A549 (cell line): ENCODE measurements at regions of chr2 and their contacts with region 1.

Region 1: DNA sequence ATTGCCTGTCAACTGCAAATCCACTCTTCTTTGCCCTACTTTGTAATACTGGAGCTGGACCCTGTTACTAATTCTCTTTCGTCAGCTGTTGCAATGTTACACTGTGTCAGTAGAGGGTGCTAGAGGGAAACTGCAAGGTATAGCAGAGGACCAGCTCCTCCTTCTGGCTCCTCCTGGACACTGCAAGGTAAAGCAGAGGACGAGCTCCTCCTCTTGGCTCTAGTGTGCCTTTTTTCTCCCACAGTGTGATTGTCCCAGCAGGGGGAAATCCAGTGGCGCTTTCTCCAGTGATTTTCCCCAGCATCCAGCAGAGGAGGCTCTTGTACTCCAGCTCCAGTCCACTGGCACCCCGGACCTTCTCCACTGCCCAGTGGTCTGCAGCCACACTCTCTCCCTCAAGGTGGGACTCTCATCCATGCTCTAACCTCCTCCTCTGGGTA is 95.6 kb downstream of the CAPN13 start:
- DNase-seq: peak; percentile 80 to 94
- ATAC-seq: peak; percentile 66 to 87
- H3K4me3 ChIP-seq: no peak overlapping the region
- H3K27ac ChIP-seq: no peak overlapping the region
- H3K4me1 ChIP-seq: no peaks in the 10 kb centered on the region
- CTCF ChIP-seq: peak; percentile 100
- EP300 ChIP-seq: no peak
- POLR2A ChIP-seq: no peak
- RAD21 ChIP-seq: peak; percentile 91 to 99

Region 2: GRCh38 chr2:30089171-30089570 is 622.5 kb before region 1 on chr2:
- CTCF ChIA-PET with region 1: interaction called, 11 read pairs
- POLR2A ChIA-PET with region 1: no interaction called
- DNase-seq: no peak
- ATAC-seq: no peak
- H3K4me3 ChIP-seq: no peak overlapping the region
- H3K27ac ChIP-seq: no peak overlapping the region
- H3K4me1 ChIP-seq: no peaks in the 10 kb centered on the region
- CTCF ChIP-seq: no peak
- EP300 ChIP-seq: no peak
- POLR2A ChIP-seq: no peak
- RAD21 ChIP-seq: no peak

Region 3: GRCh38 chr2:30208452-30208851 is 503.2 kb before region 1 on chr2:
- CTCF ChIA-PET with region 1: interaction called, 430 read pairs
- POLR2A ChIA-PET with region 1: no interaction called
- DNase-seq: peak; percentile 44 to 84
- ATAC-seq: peak; percentile 91 to 97
- H3K4me3 ChIP-seq: no peak overlapping the region
- H3K27ac ChIP-seq: peak overlapping the region; percentile 35 to 67; a peak in 4 of 6 replicates
- H3K4me1 ChIP-seq: peaks cover 5% of the 10 kb centered on the region; the same call in 2 of the 3 replicates
- CTCF ChIP-seq: peak; percentile 98
- EP300 ChIP-seq: no peak
- POLR2A ChIP-seq: no peak
- RAD21 ChIP-seq: peak; percentile 99 to 100

Region 4: GRCh38 chr2:30231212-30231995 is 480.3 kb before region 1 on chr2 and contains the start of gene LBH:
- CTCF ChIA-PET with region 1: interaction called, 22 read pairs
- POLR2A ChIA-PET with region 1: interaction called, 5 read pairs
- DNase-seq: peak; percentile 87 to 88
- ATAC-seq: peak; percentile 59 to 68
- H3K4me3 ChIP-seq: peak within 1 kb of the TSS; percentile 97
- H3K27ac ChIP-seq: peak within 1 kb of the TSS; percentile 92 to 94
- H3K4me1 ChIP-seq: peaks cover 33% of the 10 kb centered on the region
- CTCF ChIP-seq: 0 out of 3 replicates have a peak, but pooled peaks have one; percentile 11
- EP300 ChIP-seq: no peak
- POLR2A ChIP-seq: peak; percentile 100
- RAD21 ChIP-seq: 0 out of 5 replicates have a peak, but pooled peaks of 1 of the 2 experiments have one; percentile 21
- polyA plus RNA-seq, gene LBH: 149 and 163 TPM in 2 replicates

Region 5: GRCh38 chr2:30721668-30722647 is 10.3 kb after region 1 on chr2:
- CTCF ChIA-PET with region 1: interaction called, 76 read pairs
- POLR2A ChIA-PET with region 1: no interaction called
- DNase-seq: no peak
- ATAC-seq: peak in 1 of 2 experiments; percentile 13; a peak in 1 of 6 replicates
- H3K4me3 ChIP-seq: no peak overlapping the region
- H3K27ac ChIP-seq: no peak overlapping the region
- H3K4me1 ChIP-seq: no peaks in the 10 kb centered on the region
- CTCF ChIP-seq: no peak
- EP300 ChIP-seq: no peak
- POLR2A ChIP-seq: no peak
- RAD21 ChIP-seq: no peak

Region 6: DNA sequence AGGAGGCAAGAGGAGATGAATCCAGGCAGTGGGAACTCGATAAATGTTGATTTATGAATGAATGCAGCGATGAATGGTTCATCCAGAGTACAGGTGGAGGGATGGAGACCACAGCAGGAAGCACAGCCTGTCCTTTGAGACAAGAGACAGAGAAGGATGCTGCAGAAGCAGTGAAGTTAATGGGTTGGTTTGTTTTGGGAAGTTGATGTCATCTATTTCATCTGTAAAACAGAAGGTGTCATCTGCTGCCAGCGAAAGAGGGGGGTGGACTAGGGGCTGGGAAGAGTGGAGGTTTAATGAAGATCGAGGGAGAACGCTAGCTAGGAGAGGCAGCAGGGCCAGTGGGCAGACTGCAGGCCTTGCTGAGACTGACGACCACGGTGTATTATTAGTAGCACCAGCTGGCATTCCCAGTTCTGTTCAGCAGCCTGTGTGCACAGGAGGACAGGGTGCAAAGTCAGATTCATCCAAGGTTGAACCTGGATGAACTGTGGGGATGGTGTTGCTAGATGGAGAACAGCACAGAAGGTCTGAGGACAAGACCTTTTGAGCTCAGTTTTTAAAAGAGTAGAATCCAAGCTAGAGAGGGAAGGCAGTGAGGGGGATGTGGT is 215.9 kb after region 1 on chr2:
- CTCF ChIA-PET with region 1: no interaction called
- POLR2A ChIA-PET with region 1: no interaction called
- DNase-seq: no peak
- ATAC-seq: no peak
- H3K4me3 ChIP-seq: no peak overlapping the region
- H3K27ac ChIP-seq: no peak overlapping the region
- H3K4me1 ChIP-seq: no peaks in the 10 kb centered on the region
- CTCF ChIP-seq: no peak
- EP300 ChIP-seq: no peak
- POLR2A ChIP-seq: no peak
- RAD21 ChIP-seq: no peak

Region 7: GRCh38 chr2:31170071-31170698 is 458.5 kb after region 1 on chr2:
- CTCF ChIA-PET with region 1: interaction called, 272 read pairs
- POLR2A ChIA-PET with region 1: no interaction called
- DNase-seq: peak; percentile 78 to 84
- ATAC-seq: peak; percentile 92 to 98
- H3K4me3 ChIP-seq: no peak overlapping the region
- H3K27ac ChIP-seq: no peak overlapping the region
- H3K4me1 ChIP-seq: no peaks in the 10 kb centered on the region
- CTCF ChIP-seq: peak; percentile 97
- EP300 ChIP-seq: no peak
- POLR2A ChIP-seq: no peak
- RAD21 ChIP-seq: peak; percentile 96 to 98